Mammary epithelial cell (primary cell): ENCODE measurements at regions of chr5 and their contacts with region 1.

Region 1: DNA sequence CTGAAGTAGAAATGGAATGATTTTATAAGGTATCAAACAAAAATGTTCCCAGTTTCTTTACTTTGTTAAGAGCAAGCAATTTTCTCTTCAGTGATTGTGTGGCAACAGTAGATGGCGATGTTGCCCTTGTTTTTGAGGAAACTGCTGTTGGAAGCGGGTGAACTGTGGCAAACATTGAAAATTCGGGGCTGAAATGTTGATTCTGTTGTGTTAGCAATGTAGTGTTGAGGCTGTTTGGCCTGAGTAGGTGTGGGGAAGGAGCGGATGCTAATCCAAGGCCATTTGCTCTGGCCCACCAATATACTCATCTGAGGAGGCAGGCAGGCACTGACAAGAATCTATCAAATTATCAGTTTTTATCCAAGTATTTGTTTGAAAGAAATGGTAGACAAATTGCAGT is 129.8 kb downstream of the SLC12A2 start:
- DNase-seq: peak; percentile 46
- H3K4me3 ChIP-seq: no peak overlapping the region
- H3K27ac ChIP-seq: no peak overlapping the region
- H3K4me1 ChIP-seq: peaks cover 8% of the 10 kb centered on the region
- H3K27me3 ChIP-seq: no peaks in the 10 kb centered on the region
- CTCF ChIP-seq: peak; percentile 74 to 78

Region 2: GRCh38 chr5:128228008-128228407 is 14.7 kb after region 1 on chr5:
- CTCF ChIA-PET with region 1: no interaction called
- dilution Hi-C with region 1: no loop called
- in situ Hi-C with region 1: no loop called
- intact Hi-C with region 1: no loop called
- DNase-seq: peak; percentile 85
- H3K4me3 ChIP-seq: no peak overlapping the region
- H3K27ac ChIP-seq: no peak overlapping the region
- H3K4me1 ChIP-seq: peaks cover 22% of the 10 kb centered on the region
- H3K27me3 ChIP-seq: no peaks in the 10 kb centered on the region
- CTCF ChIP-seq: no peak

Region 3: GRCh38 chr5:128498844-128499455 is 285.6 kb after region 1 on chr5:
- CTCF ChIA-PET with region 1: no interaction called
- dilution Hi-C with region 1: no loop called
- in situ Hi-C with region 1: loop called (anchors 10 kb)
- intact Hi-C with region 1: loop called (anchors 1 kb)
- DNase-seq: peak; percentile 20
- H3K4me3 ChIP-seq: no peak overlapping the region
- H3K27ac ChIP-seq: no peak overlapping the region
- H3K4me1 ChIP-seq: no peaks in the 10 kb centered on the region
- H3K27me3 ChIP-seq: no peaks in the 10 kb centered on the region
- CTCF ChIP-seq: peak; percentile 50 to 61

Region 4: DNA sequence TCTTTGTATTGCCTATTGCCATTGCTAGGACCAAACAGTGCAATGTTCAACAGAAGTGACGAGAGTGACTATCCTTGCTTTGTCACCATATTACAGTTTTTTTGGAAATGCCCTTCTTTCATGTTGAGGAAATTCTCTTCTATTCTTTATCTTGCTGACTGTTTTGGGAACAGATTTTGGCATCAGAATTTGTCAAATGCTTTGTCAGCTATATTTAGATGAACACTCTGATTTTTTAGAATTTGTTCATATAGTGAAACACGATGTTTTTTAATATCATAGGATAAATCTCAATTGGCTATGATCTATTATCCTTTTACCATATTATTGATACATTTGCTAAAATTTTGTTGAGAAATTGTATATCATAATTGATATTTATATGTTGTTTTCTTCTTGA is 293.3 kb after region 1 on chr5:
- CTCF ChIA-PET with region 1: no interaction called
- dilution Hi-C with region 1: no loop called
- in situ Hi-C with region 1: loop called in 1 of 2 experiments (anchors 10 kb)
- intact Hi-C with region 1: no loop called
- DNase-seq: no peak
- H3K4me3 ChIP-seq: no peak overlapping the region
- H3K27ac ChIP-seq: no peak overlapping the region
- H3K4me1 ChIP-seq: no peaks in the 10 kb centered on the region
- H3K27me3 ChIP-seq: no peaks in the 10 kb centered on the region
- CTCF ChIP-seq: no peak

Region 5: DNA sequence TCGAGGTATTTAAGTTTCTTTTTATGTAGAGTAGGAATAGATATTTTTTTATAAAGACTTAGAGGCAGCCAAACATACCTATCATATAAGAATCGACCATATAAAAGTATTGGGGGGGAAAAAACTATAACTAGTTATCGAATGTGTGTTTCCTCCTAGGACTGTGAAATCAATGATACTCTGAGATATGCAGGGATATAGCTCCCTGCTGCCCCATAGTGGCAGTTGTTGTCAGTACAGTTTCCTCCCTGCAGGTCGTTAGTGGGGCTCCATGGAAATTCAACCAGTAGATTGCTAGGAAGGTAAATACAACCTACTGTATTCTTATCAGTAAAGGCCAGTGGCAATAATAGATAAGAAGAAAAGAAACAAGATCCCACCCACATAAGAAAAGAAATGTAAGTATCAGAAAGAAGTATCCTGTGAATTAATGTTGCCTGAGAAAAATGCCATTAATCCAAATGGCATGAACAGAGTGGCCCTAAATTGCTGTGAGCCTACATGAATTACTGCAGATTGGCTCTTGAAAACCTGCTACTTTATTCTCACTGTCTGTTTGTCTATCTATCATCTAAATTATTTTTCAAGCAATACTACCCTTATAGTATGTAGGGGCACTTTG is 461.6 kb after region 1 on chr5:
- CTCF ChIA-PET with region 1: no interaction called
- dilution Hi-C with region 1: no loop called
- in situ Hi-C with region 1: loop called in 1 of 2 experiments (anchors 25 kb)
- intact Hi-C with region 1: loop called (anchors 1 kb)
- DNase-seq: peak; percentile 43
- H3K4me3 ChIP-seq: no peak overlapping the region
- H3K27ac ChIP-seq: no peak overlapping the region
- H3K4me1 ChIP-seq: no peaks in the 10 kb centered on the region
- H3K27me3 ChIP-seq: no peaks in the 10 kb centered on the region
- CTCF ChIP-seq: peak; percentile 87

Region 6: GRCh38 chr5:128857076-128857677 is 643.8 kb after region 1 on chr5:
- CTCF ChIA-PET with region 1: no interaction called
- dilution Hi-C with region 1: no loop called
- in situ Hi-C with region 1: loop called in 1 of 2 experiments (anchors 10 kb)
- intact Hi-C with region 1: no loop called
- DNase-seq: no peak
- H3K4me3 ChIP-seq: no peak overlapping the region
- H3K27ac ChIP-seq: no peak overlapping the region
- H3K4me1 ChIP-seq: no peaks in the 10 kb centered on the region
- H3K27me3 ChIP-seq: no peaks in the 10 kb centered on the region
- CTCF ChIP-seq: no peak

Region 7: DNA sequence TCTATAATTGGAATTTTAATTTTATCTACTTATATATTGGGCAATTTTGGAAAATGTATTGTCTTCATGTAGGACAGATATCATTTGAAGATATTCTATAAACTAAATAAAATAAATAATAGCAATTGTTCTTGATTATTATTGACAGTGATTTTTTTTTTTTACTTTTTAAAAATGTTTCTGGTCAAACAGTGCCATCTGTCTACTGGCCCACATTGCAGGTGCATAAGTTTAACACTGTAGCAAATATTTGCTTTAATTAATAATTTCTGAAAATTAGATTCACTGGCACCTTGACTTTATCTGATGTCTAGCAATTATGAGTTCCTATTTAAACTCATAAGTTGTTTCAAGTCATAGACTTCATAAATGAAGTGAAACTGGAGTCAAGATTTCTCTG is 840.1 kb after region 1 on chr5:
- CTCF ChIA-PET with region 1: no interaction called
- dilution Hi-C with region 1: no loop called
- in situ Hi-C with region 1: no loop called
- intact Hi-C with region 1: loop called (anchors 5 kb)
- DNase-seq: no peak
- H3K4me3 ChIP-seq: no peak overlapping the region
- H3K27ac ChIP-seq: no peak overlapping the region
- H3K4me1 ChIP-seq: no peaks in the 10 kb centered on the region
- H3K27me3 ChIP-seq: no peaks in the 10 kb centered on the region
- CTCF ChIP-seq: peak in 1 of 2 donors; percentile 35

Region 8: DNA sequence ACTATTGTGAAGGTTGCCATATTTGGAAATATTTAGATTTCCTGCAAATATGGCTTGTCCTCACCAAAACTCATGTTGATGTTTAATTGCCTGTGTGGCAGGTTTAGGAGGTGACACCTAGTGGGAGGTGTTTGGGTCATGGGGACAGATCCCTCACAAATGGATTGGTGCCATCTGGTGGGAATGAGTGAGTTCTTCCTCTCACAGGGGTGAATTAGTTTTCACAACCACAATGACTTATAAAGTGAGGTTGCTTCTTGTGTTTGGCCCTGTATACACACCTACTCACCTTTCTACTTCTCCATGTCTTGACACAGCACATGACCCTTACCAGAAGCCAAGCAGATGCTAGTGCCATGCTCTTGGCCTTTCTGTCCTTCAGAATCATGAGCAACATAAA is 922.3 kb after region 1 on chr5:
- CTCF ChIA-PET with region 1: no interaction called
- dilution Hi-C with region 1: no loop called
- in situ Hi-C with region 1: no loop called
- intact Hi-C with region 1: loop called (anchors 10 kb)
- DNase-seq: no peak
- H3K4me3 ChIP-seq: no peak overlapping the region
- H3K27ac ChIP-seq: no peak overlapping the region
- H3K4me1 ChIP-seq: no peaks in the 10 kb centered on the region
- H3K27me3 ChIP-seq: no peaks in the 10 kb centered on the region
- CTCF ChIP-seq: peak in 1 of 2 donors; percentile 27